RWPE1 (cell line): ENCODE measurements at regions of chr7 and their contacts with region 1.

Region 1: DNA sequence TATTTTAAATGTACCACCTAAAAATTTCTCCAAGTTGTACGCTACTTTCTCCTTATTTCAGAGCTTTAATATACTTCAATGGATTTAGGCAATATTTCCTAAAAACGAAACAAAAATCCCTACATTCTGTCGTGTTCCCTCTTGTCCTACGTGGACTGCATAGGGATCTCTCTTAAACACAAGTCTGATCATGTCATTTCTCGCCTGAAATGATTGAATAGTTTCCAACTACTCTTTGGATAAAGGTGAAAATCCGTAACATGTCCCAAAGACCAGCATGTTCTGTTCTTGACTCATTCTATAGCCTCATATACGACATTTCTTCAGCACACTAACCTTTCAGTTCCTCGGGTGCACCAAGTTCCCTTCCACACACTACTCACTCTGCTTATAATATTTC is 17.7 kb upstream of the TPK1 start:
- DNase-seq: peak; percentile 27
- H3K27ac ChIP-seq: peak overlapping the region; percentile 62
- CTCF ChIP-seq: no peak

Region 2: GRCh38 chr7:144709066-144709465 is 144.5 kb before region 1 on chr7:
- CTCF ChIA-PET with region 1: no interaction called
- POLR2A ChIA-PET with region 1: no interaction called
- DNase-seq: no peak
- H3K27ac ChIP-seq: no peak overlapping the region
- CTCF ChIP-seq: no peak

Region 3: DNA sequence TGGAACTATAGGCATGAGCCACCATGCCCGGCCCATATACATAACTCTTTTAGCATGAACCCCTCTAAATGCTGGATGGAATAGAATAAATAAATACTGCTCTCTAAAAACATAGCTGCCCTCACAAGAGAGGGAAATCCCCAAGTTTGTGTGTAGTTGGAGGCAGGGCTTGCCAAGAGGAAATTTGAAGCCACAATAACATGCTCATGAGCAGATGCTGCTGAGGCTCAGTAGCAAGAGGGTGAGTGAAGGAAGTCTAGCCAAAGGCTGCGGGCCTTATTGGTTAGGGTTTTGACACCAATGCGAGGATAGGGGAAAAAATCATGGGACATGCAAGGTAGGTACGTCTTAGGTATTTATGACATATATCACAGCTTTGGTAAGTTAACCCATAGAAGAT is 35.0 kb before region 1 on chr7:
- CTCF ChIA-PET with region 1: no interaction called
- POLR2A ChIA-PET with region 1: no interaction called
- DNase-seq: no peak
- H3K27ac ChIP-seq: no peak overlapping the region
- CTCF ChIP-seq: no peak

Region 4: GRCh38 chr7:144957998-144958397 is 104.5 kb after region 1 on chr7:
- CTCF ChIA-PET with region 1: no interaction called
- POLR2A ChIA-PET with region 1: no interaction called
- DNase-seq: no peak
- H3K27ac ChIP-seq: no peak overlapping the region
- CTCF ChIP-seq: no peak

Region 5: GRCh38 chr7:145009876-145010275 is 156.3 kb after region 1 on chr7:
- CTCF ChIA-PET with region 1: no interaction called
- POLR2A ChIA-PET with region 1: no interaction called
- DNase-seq: no peak
- H3K27ac ChIP-seq: no peak overlapping the region
- CTCF ChIP-seq: no peak

Region 6: DNA sequence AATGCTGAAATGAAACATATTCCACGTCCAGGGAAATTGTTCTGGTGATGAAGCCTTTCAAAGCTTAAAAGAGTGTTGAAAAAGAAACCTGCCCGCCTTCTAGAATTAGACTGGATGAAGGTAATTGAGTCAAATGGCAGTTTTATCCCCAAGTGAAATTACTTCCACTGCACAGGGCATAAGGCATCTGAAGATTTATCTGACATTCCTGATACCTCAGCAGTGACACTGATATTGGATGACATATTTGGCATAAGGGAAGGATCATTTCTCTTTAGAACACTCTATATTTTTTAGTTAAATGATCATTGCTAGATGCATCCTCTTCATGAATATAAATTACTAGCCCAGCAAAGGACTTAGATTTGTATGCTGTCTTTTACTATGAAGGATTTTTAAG is 211.9 kb after region 1 on chr7:
- CTCF ChIA-PET with region 1: no interaction called
- POLR2A ChIA-PET with region 1: interaction called, 10 read pairs
- DNase-seq: no peak
- H3K27ac ChIP-seq: no peak overlapping the region
- CTCF ChIP-seq: no peak